CD8-positive, alpha-beta T cell (primary cell): ENCODE measurements at regions of chr7 and their contacts with region 1.

Region 1: GRCh38 chr7:108497082-108497725 is 28.7 kb downstream of the PNPLA8 start:
- DNase-seq: peak; percentile 18 to 74 (median 52)
- ATAC-seq: peak; percentile 93
- H3K4me3 ChIP-seq: no peak overlapping the region
- H3K4me3 Mint-ChIP-seq: no peak overlapping the region
- H3K27ac ChIP-seq: no peak overlapping the region
- H3K27ac Mint-ChIP-seq: no peak overlapping the region
- H3K4me1 ChIP-seq: no peaks in the 10 kb centered on the region
- H3K4me1 Mint-ChIP-seq: peaks cover 6% of the 10 kb centered on the region
- H3K27me3 ChIP-seq: no peaks in the 10 kb centered on the region
- H3K27me3 Mint-ChIP-seq: no peaks in the 10 kb centered on the region
- CTCF ChIP-seq: peak; percentile 95

Region 2: GRCh38 chr7:107982918-107983389 is 514.2 kb before region 1 on chr7:
- CTCF ChIA-PET with region 1: no interaction called
- POLR2A ChIA-PET with region 1: no interaction called
- intact Hi-C with region 1: no loop called
- DNase-seq: no peak
- ATAC-seq: no peak
- H3K4me3 ChIP-seq: no peak overlapping the region
- H3K4me3 Mint-ChIP-seq: no peak overlapping the region
- H3K27ac ChIP-seq: no peak overlapping the region
- H3K27ac Mint-ChIP-seq: no peak overlapping the region
- H3K4me1 ChIP-seq: no peaks in the 10 kb centered on the region
- H3K4me1 Mint-ChIP-seq: no peaks in the 10 kb centered on the region
- H3K27me3 ChIP-seq: no peaks in the 10 kb centered on the region
- H3K27me3 Mint-ChIP-seq: peaks cover 12% of the 10 kb centered on the region
- CTCF ChIP-seq: no peak

Region 3: GRCh38 chr7:108181073-108181985 is 315.9 kb before region 1 on chr7:
- CTCF ChIA-PET with region 1: interaction called, 12 read pairs
- POLR2A ChIA-PET with region 1: no interaction called
- intact Hi-C with region 1: loop called (anchors 1 kb)
- DNase-seq: peak in 2 of 9 experiments; percentile 51 to 66
- ATAC-seq: peak; percentile 59
- H3K4me3 ChIP-seq: no peak overlapping the region
- H3K4me3 Mint-ChIP-seq: no peak overlapping the region
- H3K27ac ChIP-seq: no peak overlapping the region
- H3K27ac Mint-ChIP-seq: no peak overlapping the region
- H3K4me1 ChIP-seq: no peaks in the 10 kb centered on the region
- H3K4me1 Mint-ChIP-seq: no peaks in the 10 kb centered on the region
- H3K27me3 ChIP-seq: no peaks in the 10 kb centered on the region
- H3K27me3 Mint-ChIP-seq: no peaks in the 10 kb centered on the region
- CTCF ChIP-seq: peak; percentile 94

Region 4: DNA sequence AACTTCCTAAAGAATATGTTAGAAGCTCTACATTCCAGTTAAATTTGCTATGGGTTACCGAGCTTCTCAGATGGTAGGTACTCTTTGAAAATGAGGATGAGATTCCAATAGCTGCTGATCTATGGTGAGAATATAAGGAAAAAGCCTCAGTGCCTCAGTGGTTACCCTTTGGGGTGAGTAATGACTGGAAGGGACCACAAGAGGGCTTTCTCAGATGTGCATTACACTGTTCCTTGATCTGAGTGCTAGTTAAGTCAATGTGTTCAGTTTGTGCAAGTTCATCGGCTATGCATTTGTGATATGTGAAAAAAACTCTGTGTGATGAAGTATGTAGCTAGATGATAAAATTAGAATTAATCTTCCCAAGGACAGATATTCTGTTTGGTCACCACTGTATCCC is 44.5 kb before region 1 on chr7:
- CTCF ChIA-PET with region 1: interaction called, 77 read pairs
- POLR2A ChIA-PET with region 1: interaction called, 4 read pairs
- intact Hi-C with region 1: loop called (anchors 1 kb)
- DNase-seq: peak in 3 of 9 experiments; percentile 26 to 67 (median 41)
- ATAC-seq: peak; percentile 54
- H3K4me3 ChIP-seq: no peak overlapping the region
- H3K4me3 Mint-ChIP-seq: no peak overlapping the region
- H3K27ac ChIP-seq: no peak overlapping the region
- H3K27ac Mint-ChIP-seq: no peak overlapping the region
- H3K4me1 ChIP-seq: peaks cover 28% of the 10 kb centered on the region
- H3K4me1 Mint-ChIP-seq: peaks cover 41% of the 10 kb centered on the region
- H3K27me3 ChIP-seq: peaks cover 0 to 4% of the 10 kb centered on the region in 2 experiments
- H3K27me3 Mint-ChIP-seq: peaks cover 16% of the 10 kb centered on the region
- CTCF ChIP-seq: peak; percentile 57

Region 5: GRCh38 chr7:108486291-108486966 is 10.8 kb before region 1 on chr7:
- CTCF ChIA-PET with region 1: interaction called, 16 read pairs
- POLR2A ChIA-PET with region 1: no interaction called
- intact Hi-C with region 1: no loop called
- DNase-seq: no peak
- ATAC-seq: no peak
- H3K4me3 ChIP-seq: no peak overlapping the region
- H3K4me3 Mint-ChIP-seq: no peak overlapping the region
- H3K27ac ChIP-seq: no peak overlapping the region
- H3K27ac Mint-ChIP-seq: no peak overlapping the region
- H3K4me1 ChIP-seq: no peaks in the 10 kb centered on the region
- H3K4me1 Mint-ChIP-seq: no peaks in the 10 kb centered on the region
- H3K27me3 ChIP-seq: no peaks in the 10 kb centered on the region
- H3K27me3 Mint-ChIP-seq: no peaks in the 10 kb centered on the region
- CTCF ChIP-seq: no peak